A673 (cell line): ENCODE measurements at regions of chr9 and their contacts with region 1.

Region 1: GRCh38 chr9:5976674-5977397 is 38.6 kb downstream of the RANBP6 start:
- DNase-seq: no peak
- H3K4me3 ChIP-seq: no peak overlapping the region
- H3K27ac ChIP-seq: no peak overlapping the region
- H3K4me1 ChIP-seq: no peaks in the 10 kb centered on the region
- H3K27me3 ChIP-seq: no peaks in the 10 kb centered on the region
- CTCF ChIP-seq: peak; percentile 20; the same call in 1 of the 2 replicates

Region 2: DNA sequence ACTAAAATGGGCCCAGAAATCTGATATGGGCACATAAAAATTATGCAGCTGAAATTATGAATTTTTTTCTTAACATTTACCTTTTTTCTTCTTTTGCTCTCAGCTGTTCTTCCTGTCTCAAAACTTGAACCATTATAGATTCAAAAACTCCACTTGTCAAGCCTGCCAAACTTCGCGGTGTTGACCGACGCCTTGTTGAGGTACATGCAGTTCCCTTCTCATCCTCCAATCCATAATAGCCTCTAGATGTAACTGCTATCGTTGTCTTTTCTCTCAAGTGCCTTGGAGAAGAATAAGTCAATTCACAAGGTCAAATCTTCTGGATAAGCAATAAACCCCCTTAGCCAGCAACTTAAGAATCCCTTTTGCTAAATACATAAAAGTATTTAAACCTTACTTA is 11.4 kb after region 1 on chr9:
- CTCF ChIA-PET with region 1: no interaction called
- POLR2A ChIA-PET with region 1: interaction called, 18 read pairs
- intact Hi-C with region 1: no loop called
- DNase-seq: no peak
- H3K4me3 ChIP-seq: no peak overlapping the region
- H3K27ac ChIP-seq: no peak overlapping the region
- H3K4me1 ChIP-seq: no peaks in the 10 kb centered on the region
- H3K27me3 ChIP-seq: no peaks in the 10 kb centered on the region
- CTCF ChIP-seq: no peak